Endothelial cell of umbilical vein (primary cell): ENCODE measurements at regions of chr22 and their contacts with region 1.

Region 1: GRCh38 chr22:23521441-23522113 is 58.5 kb downstream of the IGLL1 start:
- DNase-seq: peak; percentile 96
- H3K4me3 ChIP-seq: no peak overlapping the region
- H3K27ac ChIP-seq: peak overlapping the region; percentile 97
- H3K4me1 ChIP-seq: peaks cover 23% of the 10 kb centered on the region
- H3K27me3 ChIP-seq: no peaks in the 10 kb centered on the region
- CTCF ChIP-seq: no peak
- POLR2A ChIP-seq: peak; percentile 35

Region 2: GRCh38 chr22:23305922-23306374 is 215.6 kb before region 1 on chr22:
- CTCF ChIA-PET with region 1: no interaction called
- POLR2A ChIA-PET with region 1: no interaction called
- dilution Hi-C with region 1: no loop called
- intact Hi-C with region 1: loop called (anchors 5 kb)
- DNase-seq: peak; percentile 96
- H3K4me3 ChIP-seq: peak overlapping the region in 1 of 3 experiments; percentile 1
- H3K27ac ChIP-seq: peak overlapping the region; percentile 96
- H3K4me1 ChIP-seq: peaks cover 69% of the 10 kb centered on the region
- H3K27me3 ChIP-seq: no peaks in the 10 kb centered on the region
- CTCF ChIP-seq: no peak
- POLR2A ChIP-seq: no peak

Region 3: GRCh38 chr22:23322547-23322946 is 199.0 kb before region 1 on chr22:
- CTCF ChIA-PET with region 1: no interaction called
- POLR2A ChIA-PET with region 1: no interaction called
- dilution Hi-C with region 1: no loop called
- intact Hi-C with region 1: no loop called
- DNase-seq: no peak
- H3K4me3 ChIP-seq: no peak overlapping the region
- H3K27ac ChIP-seq: no peak overlapping the region
- H3K4me1 ChIP-seq: no peaks in the 10 kb centered on the region
- H3K27me3 ChIP-seq: no peaks in the 10 kb centered on the region
- CTCF ChIP-seq: no peak
- POLR2A ChIP-seq: no peak

Region 4: GRCh38 chr22:23402275-23403151 is 119.1 kb before region 1 on chr22:
- CTCF ChIA-PET with region 1: no interaction called
- POLR2A ChIA-PET with region 1: no interaction called
- dilution Hi-C with region 1: no loop called
- intact Hi-C with region 1: loop called (anchors 5 kb)
- DNase-seq: peak; percentile 39
- H3K4me3 ChIP-seq: peak overlapping the region in 1 of 3 experiments; percentile 15
- H3K27ac ChIP-seq: no peak overlapping the region
- H3K4me1 ChIP-seq: no peaks in the 10 kb centered on the region
- H3K27me3 ChIP-seq: no peaks in the 10 kb centered on the region
- CTCF ChIP-seq: peak; percentile 45 to 86
- POLR2A ChIP-seq: no peak

Region 5: DNA sequence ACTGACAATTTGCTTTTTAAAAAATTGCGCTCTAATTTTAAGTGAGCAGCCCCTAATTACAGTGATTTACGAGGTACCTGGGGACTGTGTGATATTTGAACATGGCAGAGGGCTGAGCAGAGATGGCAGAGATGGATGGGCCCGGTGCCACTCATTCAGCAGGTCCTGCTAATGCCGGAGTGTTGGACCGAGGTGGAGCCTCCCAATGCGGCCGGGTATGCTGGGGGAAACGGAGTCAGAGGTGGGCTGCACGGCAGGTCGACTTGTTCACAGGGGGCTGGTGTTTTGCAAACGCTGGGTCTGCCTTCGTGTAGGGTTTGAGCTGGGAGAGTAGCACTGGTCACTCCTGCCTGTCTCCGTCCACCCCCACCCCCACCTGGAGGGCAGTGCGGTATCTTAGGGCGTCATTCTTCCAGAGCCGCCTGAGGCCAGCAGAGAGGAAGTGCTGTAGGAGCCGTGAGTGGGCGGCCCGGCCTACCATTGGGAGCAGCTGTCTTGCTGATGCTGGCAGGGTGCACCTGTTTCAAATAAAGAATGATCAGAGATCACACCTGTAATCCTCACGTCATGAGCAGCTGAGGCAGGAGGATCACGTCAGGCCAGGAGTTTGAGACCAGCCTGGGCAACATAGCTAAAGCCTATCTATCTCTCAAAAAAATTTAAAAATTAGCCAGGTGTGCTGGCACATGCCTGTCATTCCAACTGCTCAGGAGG is 64.1 kb before region 1 on chr22:
- CTCF ChIA-PET with region 1: no interaction called
- POLR2A ChIA-PET with region 1: no interaction called
- dilution Hi-C with region 1: no loop called
- intact Hi-C with region 1: no loop called
- DNase-seq: no peak
- H3K4me3 ChIP-seq: no peak overlapping the region
- H3K27ac ChIP-seq: no peak overlapping the region
- H3K4me1 ChIP-seq: no peaks in the 10 kb centered on the region
- H3K27me3 ChIP-seq: peaks cover 0 to 1% of the 10 kb centered on the region in 2 experiments
- CTCF ChIP-seq: no peak
- POLR2A ChIP-seq: no peak